Ascending aorta (tissue), 2 donors: ENCODE measurements at regions of chrX and their contacts with region 1.

Region 1: GRCh38 chrX:102950908-102951866 is 14.1 kb downstream of the RAB40AL start:
- DNase-seq: peak in 1 of 2 donors; percentile 70
- H3K4me3 ChIP-seq: peak overlapping the region; percentile 20 to 33
- H3K27ac ChIP-seq: no peak overlapping the region
- H3K4me1 ChIP-seq: no peaks in the 10 kb centered on the region
- H3K27me3 ChIP-seq: no peaks in the 10 kb centered on the region
- CTCF ChIP-seq: peak; percentile 22 to 57 (median 52)

Region 2: GRCh38 chrX:103157496-103158320 is 206.5 kb after region 1 on chrX:
- intact Hi-C with region 1: loop called (anchors 5 kb)
- DNase-seq: no peak
- H3K4me3 ChIP-seq: no peak overlapping the region
- H3K27ac ChIP-seq: no peak overlapping the region
- H3K4me1 ChIP-seq: no peaks in the 10 kb centered on the region
- H3K27me3 ChIP-seq: no peaks in the 10 kb centered on the region
- CTCF ChIP-seq: peak in 2 of 3 experiments; percentile 50 to 69

Region 3: GRCh38 chrX:103175944-103176753 is 225.0 kb after region 1 on chrX:
- intact Hi-C with region 1: loop called (anchors 2 kb)
- DNase-seq: peak in 1 of 2 donors; percentile 78
- H3K4me3 ChIP-seq: no peak overlapping the region
- H3K27ac ChIP-seq: no peak overlapping the region
- H3K4me1 ChIP-seq: no peaks in the 10 kb centered on the region
- H3K27me3 ChIP-seq: peaks cover 5% of the 10 kb centered on the region
- CTCF ChIP-seq: peak; percentile 51 to 68 (median 63)